Naive thymus-derived CD8-positive, alpha-beta T cell (primary cell): ENCODE measurements at regions of chr1 and their contacts with region 1.

Region 1: GRCh38 chr1:110787328-110788071 is 85.4 kb upstream of the CD53 start:
- DNase-seq: peak in 8 of 10 donors; percentile 21 to 72 (median 58)
- ATAC-seq: peak; percentile 82 to 84
- H3K4me3 Mint-ChIP-seq: peak overlapping the region; percentile 65 to 88 (median 81)
- H3K27ac Mint-ChIP-seq: peak overlapping the region; percentile 81 to 96 (median 90)
- H3K4me1 Mint-ChIP-seq: peaks cover 30 to 69% (median 64%) of the 10 kb centered on the region in 4 donors
- H3K27me3 Mint-ChIP-seq: no peaks in the 10 kb centered on the region

Region 2: DNA sequence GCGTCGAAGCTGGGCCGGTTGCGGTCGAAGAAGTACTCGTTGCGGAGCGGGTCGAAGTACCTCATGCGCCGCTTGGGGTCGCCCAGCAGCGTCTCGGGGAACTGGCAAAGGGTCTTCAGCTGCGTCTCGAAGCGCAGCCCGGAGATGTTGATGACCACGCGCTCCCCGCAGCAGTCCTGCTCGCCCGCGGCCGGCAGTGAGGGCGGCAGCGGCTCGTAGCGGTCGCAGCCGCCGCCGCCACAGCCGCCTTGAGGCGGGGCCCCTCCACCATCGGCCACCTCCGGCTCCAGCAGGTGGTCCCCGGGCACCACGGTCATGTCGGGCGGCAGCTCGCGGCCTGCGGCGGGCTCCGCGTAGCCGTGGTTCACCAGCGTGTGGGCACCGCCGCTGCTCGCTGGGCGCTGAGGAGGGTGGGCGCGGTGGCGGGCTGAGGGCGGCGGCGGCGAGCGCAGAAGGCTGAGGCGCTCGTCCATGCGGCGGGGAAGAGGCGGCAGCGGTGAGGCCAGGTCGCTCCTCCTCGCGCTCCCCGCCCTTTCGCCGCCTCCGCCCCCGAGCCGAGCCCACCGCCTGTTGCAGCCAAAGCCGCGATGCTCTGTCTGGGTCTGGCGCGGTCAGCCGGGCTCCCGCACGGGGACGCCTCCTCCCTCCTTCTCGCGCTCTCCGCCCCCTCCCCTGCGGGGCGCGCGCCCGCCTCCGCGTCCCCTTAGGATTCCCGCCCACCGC is 113.0 kb before region 1 on chr1 and contains the start of gene KCNA3:
- POLR2A ChIA-PET with region 1: interaction called, 10 read pairs
- DNase-seq: peak; percentile 59 to 82 (median 69)
- ATAC-seq: peak; percentile 26 to 42
- H3K4me3 Mint-ChIP-seq: peak within 1 kb of the TSS; percentile 91 to 100 (median 98)
- H3K27ac Mint-ChIP-seq: peak within 1 kb of the TSS; percentile 93 to 100 (median 99)
- H3K4me1 Mint-ChIP-seq: peaks cover 26 to 59% (median 44%) of the 10 kb centered on the region in 4 donors
- H3K27me3 Mint-ChIP-seq: no peaks in the 10 kb centered on the region
- polyA plus RNA-seq, gene KCNA3: 55.6 to 67.9 (median 66.4) TPM

Region 3: GRCh38 chr1:110840718-110841117 is 53.2 kb after region 1 on chr1:
- POLR2A ChIA-PET with region 1: no interaction called
- DNase-seq: no peak
- ATAC-seq: no peak
- H3K4me3 Mint-ChIP-seq: no peak overlapping the region
- H3K27ac Mint-ChIP-seq: no peak overlapping the region
- H3K4me1 Mint-ChIP-seq: no peaks in the 10 kb centered on the region
- H3K27me3 Mint-ChIP-seq: no peaks in the 10 kb centered on the region

Region 4: GRCh38 chr1:110872745-110873720 is 85.5 kb after region 1 on chr1 and contains the start of gene CD53:
- POLR2A ChIA-PET with region 1: interaction called, 27 read pairs
- DNase-seq: peak in 9 of 10 donors; percentile 50 to 86 (median 75)
- ATAC-seq: peak; percentile 74 to 83
- H3K4me3 Mint-ChIP-seq: peak within 1 kb of the TSS; percentile 92 to 100 (median 98)
- H3K27ac Mint-ChIP-seq: peak within 1 kb of the TSS; percentile 96 to 100 (median 99)
- H3K4me1 Mint-ChIP-seq: peaks cover 38 to 67% (median 59%) of the 10 kb centered on the region in 4 donors
- H3K27me3 Mint-ChIP-seq: no peaks in the 10 kb centered on the region
- polyA plus RNA-seq, gene CD53: 619 to 909 (median 820) TPM

Region 5: GRCh38 chr1:110963691-110964399 is 176.3 kb after region 1 on chr1 and contains the start of gene LRIF1:
- POLR2A ChIA-PET with region 1: interaction called, 15 read pairs
- DNase-seq: peak; percentile 91 to 100 (median 100)
- ATAC-seq: peak; percentile 92 to 94
- H3K4me3 Mint-ChIP-seq: peak within 1 kb of the TSS; percentile 79 to 99 (median 94)
- H3K27ac Mint-ChIP-seq: peak within 1 kb of the TSS; percentile 89 to 100 (median 99)
- H3K4me1 Mint-ChIP-seq: peaks cover 23 to 40% (median 30%) of the 10 kb centered on the region in 4 donors
- H3K27me3 Mint-ChIP-seq: peaks cover 8 to 16% (median 9%) of the 10 kb centered on the region in 5 donors
- polyA plus RNA-seq, gene LRIF1: 22.2 to 26.4 (median 26.3) TPM